Breast epithelium (tissue), 4 donors: ENCODE measurements at regions of chr3 and their contacts with region 1.

Region 1: DNA sequence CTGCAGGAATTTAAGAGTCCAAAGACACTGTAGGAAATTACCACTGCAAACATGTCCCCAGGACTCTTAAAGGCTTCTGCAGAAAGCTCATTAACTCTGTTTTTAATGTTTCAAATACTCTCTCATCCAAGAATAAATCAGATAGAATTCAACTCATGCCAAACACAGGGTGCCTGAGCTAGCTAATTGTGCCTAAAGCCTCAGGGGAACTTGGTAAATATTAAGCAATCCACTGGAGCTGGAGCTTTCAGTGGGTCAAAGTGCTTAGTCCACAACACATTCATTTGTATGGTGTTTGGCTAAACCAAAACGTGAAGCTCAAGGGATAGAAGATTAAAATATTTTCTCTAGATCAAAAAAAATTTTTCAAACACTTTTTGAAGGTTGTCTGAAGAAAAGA is 131.4 kb downstream of the THRB start:
- DNase-seq: peak in 1 of 2 donors; percentile 39
- H3K4me3 ChIP-seq: no peak overlapping the region
- H3K27ac ChIP-seq: peak overlapping the region; percentile 46 to 48
- H3K4me1 ChIP-seq: peaks cover 0 to 12% of the 10 kb centered on the region in 2 donors
- H3K27me3 ChIP-seq: no peaks in the 10 kb centered on the region
- CTCF ChIP-seq: no peak
- POLR2A ChIP-seq: no peak

Region 2: DNA sequence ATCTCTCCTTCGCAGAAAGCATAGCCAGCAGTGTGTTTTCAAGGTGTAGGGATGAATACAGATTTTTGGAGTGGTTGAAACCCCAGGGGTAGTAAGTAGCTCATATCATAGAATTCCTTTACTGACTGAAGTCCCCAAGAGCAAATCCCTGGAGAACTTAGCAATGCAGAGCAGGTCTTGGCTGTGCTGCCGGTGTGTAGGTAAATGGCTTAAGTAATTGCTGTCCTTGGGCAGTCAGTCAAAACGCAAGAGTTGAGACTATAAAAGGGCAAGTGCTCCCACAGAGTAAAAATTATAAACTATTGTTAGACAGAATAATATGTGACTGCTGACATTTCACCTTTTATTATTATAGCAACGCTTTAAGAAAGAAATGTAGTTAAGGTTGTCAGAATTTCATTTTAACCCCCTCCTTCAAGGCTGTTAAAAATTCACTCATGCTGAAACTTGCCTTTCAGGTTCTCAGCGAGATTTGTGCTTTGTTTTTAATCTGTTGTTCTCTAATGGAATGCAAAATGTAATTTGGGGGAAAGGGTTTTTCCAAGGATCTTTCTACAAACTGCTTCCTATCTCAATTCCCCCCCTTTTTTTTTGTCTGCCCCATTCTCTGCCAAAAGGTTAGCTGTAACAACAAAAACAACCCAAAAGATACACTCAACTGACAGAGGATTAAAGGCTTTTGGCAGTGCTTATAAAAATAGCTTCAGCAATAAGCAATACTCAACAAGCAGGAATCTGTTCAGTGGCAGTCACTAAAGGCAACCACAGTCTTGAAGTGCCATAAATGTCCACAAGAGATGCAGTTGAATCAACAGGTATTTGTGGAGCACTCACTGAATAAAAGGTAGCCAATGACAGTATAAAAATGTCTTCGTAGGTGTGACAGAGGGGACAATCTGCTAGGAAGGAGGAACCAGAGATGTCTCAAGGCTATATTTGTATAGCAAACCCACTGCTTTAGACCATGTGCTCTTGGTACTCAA is 26.2 kb after region 1 on chr3:
- intact Hi-C with region 1: loop called (anchors 2 kb)
- DNase-seq: no peak
- H3K4me3 ChIP-seq: peak overlapping the region in 1 of 3 donors; percentile 20
- H3K27ac ChIP-seq: peak overlapping the region; percentile 71 to 84
- H3K4me1 ChIP-seq: peaks cover 0 to 20% of the 10 kb centered on the region in 2 donors
- H3K27me3 ChIP-seq: no peaks in the 10 kb centered on the region
- CTCF ChIP-seq: peak in 1 of 3 donors; percentile 35
- POLR2A ChIP-seq: no peak